ENCODE measurements at regions of chr3 and their contacts with region 1.

Region 1: GRCh38 chr3:13532126-13532525 is 16.8 kb upstream of the FBLN2 start:
- DNase-seq: no peak
- ATAC-seq: no peak
- H3K4me3 Mint-ChIP-seq: no peak overlapping the region
- H3K27ac Mint-ChIP-seq: no peak overlapping the region
- H3K4me1 Mint-ChIP-seq: no peaks in the 10 kb centered on the region
- H3K27me3 Mint-ChIP-seq: peaks cover 20% of the 10 kb centered on the region
- CTCF ChIP-seq: no peak

Region 2: GRCh38 chr3:13564751-13565560 is 32.8 kb after region 1 on chr3:
- CTCF ChIA-PET with region 1: no interaction called
- POLR2A ChIA-PET with region 1: no interaction called
- intact Hi-C with region 1: no loop called
- DNase-seq: no peak
- ATAC-seq: no peak
- H3K4me3 Mint-ChIP-seq: no peak overlapping the region
- H3K27ac Mint-ChIP-seq: no peak overlapping the region
- H3K4me1 Mint-ChIP-seq: no peaks in the 10 kb centered on the region
- H3K27me3 Mint-ChIP-seq: peaks cover 3% of the 10 kb centered on the region
- CTCF ChIP-seq: no peak

Region 3: DNA sequence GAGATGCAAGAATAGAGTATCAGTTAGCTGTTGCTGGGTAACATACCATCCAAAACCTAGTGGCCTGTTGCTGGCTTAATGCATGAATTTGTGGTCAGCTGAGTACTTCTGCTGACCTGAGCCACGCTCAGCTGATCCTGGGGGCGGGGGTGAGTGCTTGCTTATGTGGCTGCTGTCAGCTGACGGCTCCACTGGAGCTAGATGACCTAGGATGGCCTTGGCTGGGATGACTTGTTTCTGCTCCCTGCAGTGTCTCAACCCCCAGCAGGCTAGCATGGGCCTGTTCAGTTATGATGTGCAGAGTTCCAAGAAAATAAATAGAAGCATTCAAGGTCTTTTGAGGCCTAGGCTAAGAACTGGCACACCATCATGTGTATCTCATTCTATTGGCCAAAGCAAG is 80.7 kb after region 1 on chr3:
- CTCF ChIA-PET with region 1: no interaction called
- POLR2A ChIA-PET with region 1: interaction called, 12 read pairs
- intact Hi-C with region 1: no loop called
- DNase-seq: no peak
- ATAC-seq: no peak
- H3K4me3 Mint-ChIP-seq: no peak overlapping the region
- H3K27ac Mint-ChIP-seq: no peak overlapping the region
- H3K4me1 Mint-ChIP-seq: no peaks in the 10 kb centered on the region
- H3K27me3 Mint-ChIP-seq: peaks cover 6% of the 10 kb centered on the region
- CTCF ChIP-seq: no peak

Region 4: DNA sequence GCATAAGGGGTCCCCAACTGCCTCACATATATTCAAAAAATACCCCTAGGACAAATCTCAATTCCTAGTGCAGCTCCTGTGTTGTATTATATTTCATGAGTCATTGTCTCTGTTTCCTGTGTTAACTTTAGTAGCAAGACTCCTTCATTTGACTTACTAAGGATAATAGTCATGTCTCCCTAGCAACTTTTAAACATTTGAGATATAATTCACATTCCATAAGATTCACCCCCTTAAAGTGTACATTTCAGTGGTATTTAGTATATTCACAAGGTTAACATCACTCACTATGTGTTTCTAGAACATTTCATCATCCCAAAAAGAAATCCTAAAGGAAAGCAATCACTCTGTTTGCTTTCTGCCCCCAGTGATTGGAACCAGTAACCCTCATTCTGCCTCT is 469.0 kb after region 1 on chr3:
- CTCF ChIA-PET with region 1: no interaction called
- POLR2A ChIA-PET with region 1: no interaction called
- intact Hi-C with region 1: no loop called
- DNase-seq: no peak
- ATAC-seq: no peak
- H3K4me3 Mint-ChIP-seq: no peak overlapping the region
- H3K27ac Mint-ChIP-seq: no peak overlapping the region
- H3K4me1 Mint-ChIP-seq: no peaks in the 10 kb centered on the region
- H3K27me3 Mint-ChIP-seq: peaks cover 9% of the 10 kb centered on the region
- CTCF ChIP-seq: no peak